Activated T-helper 2 cell treated with anti-CD3 and anti-CD28 coated beads, Interferon-gamma antibody, Interleukin-2, Interleukin-4, amounts not matched to agents 10 μg/mL and 5 μg/mL and 100 μg/mL, durations not matched to agents 14 hours and 24 hours and 36 hours (primary cell): ENCODE measurements at regions of chrX and their contacts with region 1.

Region 1: DNA sequence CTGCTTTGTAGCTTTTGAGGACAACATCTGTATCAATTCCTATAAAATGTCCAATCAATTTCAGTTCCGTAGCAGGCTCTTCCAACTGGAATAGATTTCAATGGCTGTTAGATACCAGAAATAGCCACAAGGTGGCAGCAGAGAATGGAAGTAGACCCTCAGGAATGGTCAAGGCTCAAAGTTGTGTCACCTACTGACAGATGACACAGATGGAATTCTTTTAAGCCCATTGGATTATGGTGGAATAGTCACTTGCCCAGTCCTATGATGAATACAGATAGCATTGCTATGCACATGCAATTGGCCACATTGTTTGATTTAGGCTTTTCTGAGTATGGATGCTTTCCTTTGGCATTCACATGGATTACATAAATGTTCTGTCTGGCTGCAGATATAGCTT is 130.4 kb upstream of the RADX start:
- DNase-seq: peak; percentile 9
- H3K4me3 Mint-ChIP-seq: no peak overlapping the region
- H3K27ac Mint-ChIP-seq: no peak overlapping the region
- H3K4me1 Mint-ChIP-seq: peaks cover 27% of the 10 kb centered on the region
- H3K27me3 Mint-ChIP-seq: no peaks in the 10 kb centered on the region

Region 2: GRCh38 chrX:106437405-106437804 is 43.9 kb before region 1 on chrX:
- intact Hi-C with region 1: no loop called
- DNase-seq: no peak
- H3K4me3 Mint-ChIP-seq: no peak overlapping the region
- H3K27ac Mint-ChIP-seq: no peak overlapping the region
- H3K4me1 Mint-ChIP-seq: no peaks in the 10 kb centered on the region
- H3K27me3 Mint-ChIP-seq: no peaks in the 10 kb centered on the region

Region 3: DNA sequence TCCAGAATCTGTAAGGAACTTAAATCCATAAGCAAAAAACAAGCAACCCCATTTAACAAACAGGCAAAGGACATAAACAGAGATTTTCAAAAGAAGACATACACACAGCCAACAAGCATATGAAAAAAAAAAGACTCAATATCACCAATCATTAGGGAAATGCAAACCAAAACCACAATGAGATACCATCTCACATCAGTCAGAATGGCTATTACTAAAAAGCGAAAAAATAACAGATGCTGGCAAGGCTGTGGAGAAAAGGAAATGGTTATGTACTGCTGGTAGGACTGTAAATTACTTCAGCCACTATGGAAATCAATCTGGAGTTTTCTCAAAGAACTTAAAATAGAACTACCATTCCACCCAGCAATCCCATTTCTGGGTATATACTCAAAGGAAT is 26.4 kb before region 1 on chrX:
- intact Hi-C with region 1: loop called (anchors 2 kb)
- DNase-seq: no peak
- H3K4me3 Mint-ChIP-seq: no peak overlapping the region
- H3K27ac Mint-ChIP-seq: no peak overlapping the region
- H3K4me1 Mint-ChIP-seq: peaks cover 4% of the 10 kb centered on the region
- H3K27me3 Mint-ChIP-seq: peaks cover 1% of the 10 kb centered on the region

Region 4: DNA sequence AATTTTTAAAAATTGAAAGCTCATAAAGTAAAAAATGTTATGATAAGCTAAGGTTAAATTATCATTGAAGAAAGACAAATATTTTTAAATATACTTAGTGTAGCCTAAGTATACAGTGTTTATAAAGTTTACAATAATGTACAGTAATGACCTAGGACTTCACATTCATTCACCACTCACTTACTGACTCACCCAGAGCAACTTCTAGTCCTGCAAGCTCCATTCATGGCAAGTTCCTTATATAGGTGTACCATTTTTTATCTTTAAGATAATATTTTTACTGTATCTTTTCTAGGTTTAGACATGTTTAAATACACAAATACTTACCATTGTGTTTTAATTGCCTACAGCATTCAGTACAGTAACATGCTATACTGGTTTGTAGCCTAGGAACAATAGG is 18.1 kb after region 1 on chrX:
- intact Hi-C with region 1: no loop called
- DNase-seq: no peak
- H3K4me3 Mint-ChIP-seq: no peak overlapping the region
- H3K27ac Mint-ChIP-seq: no peak overlapping the region
- H3K4me1 Mint-ChIP-seq: peaks cover 3% of the 10 kb centered on the region
- H3K27me3 Mint-ChIP-seq: no peaks in the 10 kb centered on the region

Region 5: DNA sequence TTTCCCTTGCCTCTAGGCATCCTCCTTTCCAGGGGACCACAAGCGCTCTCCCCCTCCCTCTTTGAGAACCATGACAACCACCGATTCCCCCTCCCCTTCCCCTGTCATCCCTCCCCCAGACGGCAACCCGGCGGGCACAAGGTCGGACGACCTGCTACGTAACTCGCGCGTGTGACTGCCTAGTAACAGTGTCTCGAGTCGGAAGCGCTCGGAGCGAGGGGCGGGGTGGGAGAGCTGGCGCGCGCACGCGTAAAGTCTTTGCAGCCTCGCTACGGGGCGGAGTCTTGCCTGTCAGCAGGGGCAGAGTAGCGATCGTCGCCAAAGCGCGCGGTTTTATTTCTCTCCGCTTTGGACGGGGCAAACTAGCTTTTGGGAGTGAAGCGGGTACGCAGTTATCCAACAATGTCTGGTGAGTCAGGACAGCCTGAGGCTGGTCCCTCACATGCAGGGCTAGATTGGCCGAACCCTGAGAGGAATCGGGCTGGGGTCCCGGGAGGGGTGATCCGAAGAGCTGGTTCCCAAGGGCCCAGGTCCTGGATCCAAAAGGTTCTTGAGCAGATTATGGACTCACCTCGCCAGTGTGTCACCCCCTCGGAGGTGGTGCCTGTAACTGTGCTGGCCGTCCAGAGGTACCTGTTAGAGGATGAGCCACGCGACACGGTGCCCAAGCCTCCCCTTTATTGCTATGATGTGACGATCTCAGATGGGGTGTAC is 130.5 kb after region 1 on chrX and contains the start of gene RADX:
- intact Hi-C with region 1: loop called (anchors 1 kb)
- DNase-seq: peak; percentile 84
- H3K4me3 Mint-ChIP-seq: peak within 1 kb of the TSS; percentile 94
- H3K27ac Mint-ChIP-seq: peak within 1 kb of the TSS; percentile 84
- H3K4me1 Mint-ChIP-seq: peaks cover 28% of the 10 kb centered on the region
- H3K27me3 Mint-ChIP-seq: no peaks in the 10 kb centered on the region
- total RNA-seq, gene RADX: 6.5 and 8.0 TPM in 2 replicates

Region 6: DNA sequence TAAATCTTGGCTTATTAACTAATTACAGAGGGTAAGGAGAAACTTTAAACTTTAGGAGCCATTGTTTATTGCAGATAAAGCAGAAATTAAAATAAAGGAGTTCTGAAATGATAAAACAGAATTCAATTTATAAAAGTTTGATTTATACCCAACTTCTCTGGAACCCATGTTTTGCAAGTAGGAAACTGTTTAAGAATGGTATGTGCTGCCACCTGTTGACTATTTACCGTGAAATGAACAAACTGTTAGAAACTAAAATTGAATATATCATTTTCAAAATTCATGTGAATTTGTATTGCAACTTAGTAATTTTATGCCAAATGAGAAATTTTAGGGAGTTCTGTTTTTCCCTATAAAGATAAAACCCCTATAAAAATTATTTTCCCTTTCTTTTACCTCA is 310.2 kb after region 1 on chrX:
- intact Hi-C with region 1: loop called (anchors 10 kb)
- DNase-seq: no peak
- H3K4me3 Mint-ChIP-seq: no peak overlapping the region
- H3K27ac Mint-ChIP-seq: no peak overlapping the region
- H3K4me1 Mint-ChIP-seq: no peaks in the 10 kb centered on the region
- H3K27me3 Mint-ChIP-seq: peaks cover 2% of the 10 kb centered on the region